Heart right ventricle (tissue), 16 donors: ENCODE measurements at regions of chr16 and their contacts with region 1.

Region 1: GRCh38 chr16:527006-527753 is at the start of gene CAPN15:
- DNase-seq: peak; percentile 84 to 89
- ATAC-seq: peak; percentile 83 to 92 (median 88)
- H3K4me3 ChIP-seq: peak within 1 kb of the TSS; percentile 64 to 96 (median 82)
- H3K27ac ChIP-seq: peak within 1 kb of the TSS; percentile 87 to 100 (median 99)
- H3K4me1 ChIP-seq: peaks cover 17 to 61% (median 43%) of the 10 kb centered on the region in 9 donors
- H3K27me3 ChIP-seq: no peaks in the 10 kb centered on the region
- CTCF ChIP-seq: peak in 4 of 9 donors; percentile 18 to 33 (median 26)
- total RNA-seq, gene CAPN15: 11.1 to 23.4 (median 15.3) TPM

Region 2: GRCh38 chr16:569445-570254 is 42.5 kb after region 1 on chr16 and contains the start of gene PIGQ:
- intact Hi-C with region 1: loop called in 1 of 10 experiments (anchors 5 kb)
- DNase-seq: peak; percentile 68 to 73
- ATAC-seq: peak; percentile 42 to 77 (median 64)
- H3K4me3 ChIP-seq: peak within 1 kb of the TSS; percentile 68 to 95 (median 86)
- H3K27ac ChIP-seq: peak within 1 kb of the TSS; percentile 9 to 91 (median 84)
- H3K4me1 ChIP-seq: peaks cover 18 to 50% (median 42%) of the 10 kb centered on the region in 9 donors
- H3K27me3 ChIP-seq: no peaks in the 10 kb centered on the region
- CTCF ChIP-seq: no peak
- total RNA-seq, gene PIGQ: 13.7 to 26.8 (median 19.2) TPM